Activated T-helper 2 cell treated with anti-CD3 and anti-CD28 coated beads, Interferon-gamma antibody, Interleukin-2, Interleukin-4, amounts not matched to agents 10 μg/mL and 5 μg/mL and 100 μg/mL, durations not matched to agents 14 hours and 24 hours and 36 hours (primary cell): ENCODE measurements at regions of chr6 and their contacts with region 1.

Region 1: GRCh38 chr6:28489366-28490204 is 26.0 kb downstream of the GPX6 start:
- DNase-seq: peak; percentile 17
- H3K4me3 Mint-ChIP-seq: peak overlapping the region; percentile 74
- H3K27ac Mint-ChIP-seq: peak overlapping the region; percentile 6
- H3K4me1 Mint-ChIP-seq: peaks cover 18% of the 10 kb centered on the region
- H3K27me3 Mint-ChIP-seq: peaks cover 49% of the 10 kb centered on the region

Region 2: DNA sequence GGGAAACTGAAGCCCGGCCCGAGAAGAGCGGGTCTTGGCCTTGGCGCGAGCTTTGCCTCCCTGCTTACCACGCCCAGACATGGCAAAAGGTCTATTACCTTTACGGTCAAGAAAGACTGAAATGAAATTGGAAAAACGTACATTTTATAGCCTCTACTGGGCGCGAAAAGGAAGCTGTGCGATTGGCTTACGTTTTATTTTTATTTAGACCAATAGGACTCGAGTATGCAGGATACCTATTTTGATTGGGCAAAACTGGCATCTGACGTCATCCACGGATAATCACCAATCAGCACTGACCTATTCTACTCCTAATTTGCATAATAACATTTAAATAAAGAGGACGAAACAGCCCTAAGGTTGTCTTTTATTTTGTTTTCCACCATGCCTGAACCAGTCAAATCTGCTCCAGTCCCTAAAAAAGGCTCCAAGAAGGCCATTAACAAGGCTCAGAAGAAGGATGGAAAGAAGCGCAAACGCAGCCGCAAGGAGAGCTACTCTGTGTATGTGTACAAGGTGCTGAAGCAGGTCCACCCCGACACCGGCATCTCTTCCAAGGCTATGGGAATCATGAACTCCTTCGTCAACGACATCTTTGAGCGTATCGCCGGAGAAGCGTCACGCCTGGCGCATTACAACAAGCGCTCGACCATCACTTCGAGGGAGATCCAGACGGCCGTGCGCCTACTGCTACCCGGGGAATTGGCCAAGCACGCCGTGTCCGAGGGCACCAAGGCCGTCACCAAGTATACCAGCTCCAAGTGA is 674.7 kb before region 1 on chr6:
- intact Hi-C with region 1: no loop called
- DNase-seq: peak; percentile 79
- H3K4me3 Mint-ChIP-seq: peak overlapping the region; percentile 86
- H3K27ac Mint-ChIP-seq: peak overlapping the region; percentile 100
- H3K4me1 Mint-ChIP-seq: peaks cover 53% of the 10 kb centered on the region
- H3K27me3 Mint-ChIP-seq: no peaks in the 10 kb centered on the region

Region 3: GRCh38 chr6:28542440-28543296 is 53.1 kb after region 1 on chr6:
- intact Hi-C with region 1: loop called (anchors 5 kb)
- DNase-seq: peak; percentile 46
- H3K4me3 Mint-ChIP-seq: peak overlapping the region; percentile 72
- H3K27ac Mint-ChIP-seq: no peak overlapping the region
- H3K4me1 Mint-ChIP-seq: peaks cover 23% of the 10 kb centered on the region
- H3K27me3 Mint-ChIP-seq: peaks cover 71% of the 10 kb centered on the region